Caco-2 (cell line): ENCODE measurements at regions of chr5 and their contacts with region 1.

Region 1: GRCh38 chr5:118987988-118988865 is at the start of gene DTWD2:
- DNase-seq: peak; percentile 95 to 98
- H3K4me3 ChIP-seq: peak within 1 kb of the TSS; percentile 94
- H3K4me3 Mint-ChIP-seq: peak within 1 kb of the TSS; percentile 81
- H3K27ac Mint-ChIP-seq: peak within 1 kb of the TSS; percentile 75
- H3K4me1 ChIP-seq: peaks cover 24% of the 10 kb centered on the region
- H3K4me1 Mint-ChIP-seq: peaks cover 17% of the 10 kb centered on the region
- H3K27me3 ChIP-seq: no peaks in the 10 kb centered on the region
- H3K27me3 Mint-ChIP-seq: no peaks in the 10 kb centered on the region
- CTCF ChIP-seq: peak; percentile 89 to 94
- total RNA-seq, gene DTWD2: 5.6 and 6.4 TPM in 2 replicates

Region 2: DNA sequence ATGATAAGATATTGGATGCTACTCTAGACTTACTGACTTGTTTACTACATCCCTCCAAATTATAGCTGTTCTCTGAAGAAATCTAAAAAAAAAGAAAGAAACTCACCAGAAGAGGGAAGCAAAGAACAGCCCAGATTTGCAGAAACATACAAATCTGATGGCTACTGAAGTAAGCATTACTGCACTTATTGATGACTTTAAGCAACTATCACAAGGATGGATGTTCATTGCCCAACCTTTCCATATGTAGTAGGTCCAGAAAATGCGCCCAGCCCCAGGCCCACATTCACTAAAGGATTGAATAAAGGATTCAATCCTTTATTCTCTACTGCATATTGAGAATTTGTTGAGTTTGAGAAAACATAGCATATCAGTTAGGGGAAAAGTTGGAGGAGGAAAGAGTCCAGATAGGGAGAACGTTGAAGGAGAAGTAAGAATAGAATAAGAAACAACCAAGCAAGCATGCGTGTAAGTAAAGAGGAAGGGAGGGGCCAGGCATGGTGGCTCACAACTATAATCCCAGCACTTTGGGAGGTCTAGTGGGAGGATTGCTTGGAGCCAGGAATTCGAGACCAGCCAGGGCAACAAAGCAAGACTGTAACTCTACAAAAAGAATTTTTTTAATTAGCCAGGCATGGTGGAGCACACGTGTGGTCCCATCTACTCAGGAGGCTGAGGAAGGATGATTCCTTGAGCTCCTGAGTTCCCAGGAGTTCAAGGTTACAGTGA is 34.0 kb after region 1 on chr5:
- CTCF ChIA-PET with region 1: interaction called, 4 read pairs
- POLR2A ChIA-PET with region 1: no interaction called
- intact Hi-C with region 1: loop called (anchors 1 kb)
- DNase-seq: peak in 1 of 2 experiments; percentile 34
- H3K4me3 ChIP-seq: no peak overlapping the region
- H3K4me3 Mint-ChIP-seq: no peak overlapping the region
- H3K27ac Mint-ChIP-seq: no peak overlapping the region
- H3K4me1 ChIP-seq: no peaks in the 10 kb centered on the region
- H3K4me1 Mint-ChIP-seq: peaks cover 7% of the 10 kb centered on the region
- H3K27me3 ChIP-seq: no peaks in the 10 kb centered on the region
- H3K27me3 Mint-ChIP-seq: no peaks in the 10 kb centered on the region
- CTCF ChIP-seq: peak; percentile 53 to 54

Region 3: GRCh38 chr5:119049824-119050449 is 61.7 kb after region 1 on chr5:
- CTCF ChIA-PET with region 1: no interaction called
- POLR2A ChIA-PET with region 1: no interaction called
- intact Hi-C with region 1: no loop called
- DNase-seq: no peak
- H3K4me3 ChIP-seq: no peak overlapping the region
- H3K4me3 Mint-ChIP-seq: no peak overlapping the region
- H3K27ac Mint-ChIP-seq: no peak overlapping the region
- H3K4me1 ChIP-seq: 0 out of 2 replicates have a peak, but pooled peaks cover 4% of the 10 kb centered on the region
- H3K4me1 Mint-ChIP-seq: no peaks in the 10 kb centered on the region
- H3K27me3 ChIP-seq: no peaks in the 10 kb centered on the region
- H3K27me3 Mint-ChIP-seq: no peaks in the 10 kb centered on the region
- CTCF ChIP-seq: no peak

Region 4: DNA sequence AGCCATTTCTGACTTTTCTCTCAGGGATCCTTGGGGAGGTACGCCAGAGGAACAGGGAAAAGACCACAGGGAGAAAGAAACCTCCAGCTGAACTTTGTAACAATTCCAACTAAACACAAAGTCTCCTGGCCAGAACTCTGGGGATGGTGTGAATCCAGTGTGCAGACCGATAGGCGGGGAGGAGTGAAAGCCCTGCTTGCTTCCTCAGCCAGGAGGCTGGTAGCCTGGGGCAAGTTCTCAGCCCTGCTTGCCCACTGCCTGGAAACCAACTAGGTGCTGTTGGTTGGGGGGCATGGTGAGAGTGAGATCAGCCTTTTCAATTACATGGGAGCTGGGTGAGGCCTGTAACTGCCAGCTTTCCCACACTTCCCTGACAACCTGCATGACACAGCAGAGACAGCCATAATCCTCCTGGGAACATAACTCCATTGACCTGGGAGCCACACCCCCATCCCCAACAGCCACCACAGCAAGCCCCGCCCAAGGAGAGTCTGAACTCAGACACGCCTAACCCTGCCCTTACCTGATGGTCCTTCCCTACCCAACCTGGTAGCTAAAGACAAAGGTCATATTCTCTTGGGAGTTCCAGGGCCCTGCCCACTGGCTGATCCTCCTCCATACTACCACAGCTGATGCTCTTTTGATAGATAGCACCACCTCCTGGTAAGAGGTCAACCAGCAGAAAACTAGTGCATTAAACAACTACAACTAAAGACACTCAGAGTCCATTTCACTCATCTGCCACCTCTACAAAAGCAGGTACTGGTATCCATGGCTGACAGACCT is 267.5 kb after region 1 on chr5:
- CTCF ChIA-PET with region 1: interaction called, 3 read pairs
- POLR2A ChIA-PET with region 1: no interaction called
- intact Hi-C with region 1: loop called (anchors 1 kb)
- DNase-seq: peak; percentile 71 to 88
- H3K4me3 ChIP-seq: no peak overlapping the region
- H3K4me3 Mint-ChIP-seq: no peak overlapping the region
- H3K27ac Mint-ChIP-seq: peak overlapping the region; percentile 51
- H3K4me1 ChIP-seq: peaks cover 9% of the 10 kb centered on the region; the same call in 1 of the 2 replicates
- H3K4me1 Mint-ChIP-seq: no peaks in the 10 kb centered on the region
- H3K27me3 ChIP-seq: no peaks in the 10 kb centered on the region
- H3K27me3 Mint-ChIP-seq: no peaks in the 10 kb centered on the region
- CTCF ChIP-seq: peak; percentile 12 to 34

Region 5: DNA sequence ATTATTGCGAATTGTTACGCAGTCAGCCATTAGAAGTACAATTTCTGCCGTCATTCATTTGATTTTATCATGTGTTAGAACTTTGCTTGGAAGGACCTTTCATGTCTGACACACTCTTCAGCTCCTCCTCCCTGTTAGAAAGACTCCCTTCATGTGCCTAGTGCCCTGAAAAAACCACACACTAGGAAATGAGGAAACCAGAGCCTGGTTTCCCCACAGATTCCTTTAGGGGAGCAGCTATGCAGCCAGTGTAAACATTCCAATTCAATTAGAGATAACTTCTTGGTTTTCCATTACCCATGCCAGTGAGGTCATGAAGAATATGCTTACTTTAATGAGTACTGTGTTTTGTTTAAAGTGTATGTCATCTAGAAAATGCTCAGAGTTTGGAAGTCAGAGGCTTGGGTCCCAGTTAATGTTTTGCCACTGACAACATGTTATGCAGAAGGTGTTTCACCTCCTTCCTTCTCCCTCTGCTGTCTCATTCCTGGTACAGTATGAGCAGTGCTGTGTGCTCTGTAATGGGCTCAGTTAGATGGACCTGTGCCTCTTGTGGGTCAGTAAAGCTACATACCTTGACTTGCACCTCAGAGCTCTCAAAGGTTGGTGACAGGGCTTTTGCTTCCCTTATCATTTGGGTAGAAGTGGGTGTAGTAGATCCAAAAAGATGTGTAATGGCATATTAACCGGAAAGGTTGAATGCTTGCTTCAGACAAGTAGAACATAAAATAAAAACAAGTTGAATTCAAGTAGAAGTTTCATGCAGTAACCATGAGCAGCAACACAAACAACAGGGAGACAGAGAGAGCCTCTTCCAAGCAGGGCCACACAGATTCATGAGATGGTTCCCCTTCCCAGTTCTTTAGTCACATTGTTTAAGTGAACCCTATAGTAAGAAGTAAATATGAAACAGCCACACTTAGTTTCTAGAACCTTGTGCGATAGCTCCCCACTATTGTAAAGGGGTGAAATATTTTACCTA is 315.0 kb after region 1 on chr5:
- CTCF ChIA-PET with region 1: interaction called, 3 read pairs
- POLR2A ChIA-PET with region 1: no interaction called
- intact Hi-C with region 1: loop called (anchors 1 kb)
- DNase-seq: peak; percentile 68 to 76
- H3K4me3 ChIP-seq: no peak overlapping the region
- H3K4me3 Mint-ChIP-seq: peak overlapping the region; percentile 45
- H3K27ac Mint-ChIP-seq: peak overlapping the region; percentile 85
- H3K4me1 ChIP-seq: peaks cover 31% of the 10 kb centered on the region
- H3K4me1 Mint-ChIP-seq: peaks cover 31% of the 10 kb centered on the region
- H3K27me3 ChIP-seq: no peaks in the 10 kb centered on the region
- H3K27me3 Mint-ChIP-seq: no peaks in the 10 kb centered on the region
- CTCF ChIP-seq: peak; percentile 16 to 21

Region 6: GRCh38 chr5:119335261-119335677 is 347.0 kb after region 1 on chr5:
- CTCF ChIA-PET with region 1: no interaction called
- POLR2A ChIA-PET with region 1: no interaction called
- intact Hi-C with region 1: loop called (anchors 1 kb)
- DNase-seq: no peak
- H3K4me3 ChIP-seq: no peak overlapping the region
- H3K4me3 Mint-ChIP-seq: no peak overlapping the region
- H3K27ac Mint-ChIP-seq: no peak overlapping the region
- H3K4me1 ChIP-seq: peaks cover 7% of the 10 kb centered on the region
- H3K4me1 Mint-ChIP-seq: peaks cover 17% of the 10 kb centered on the region
- H3K27me3 ChIP-seq: no peaks in the 10 kb centered on the region
- H3K27me3 Mint-ChIP-seq: no peaks in the 10 kb centered on the region
- CTCF ChIP-seq: no peak

Region 7: GRCh38 chr5:119452373-119453039 is 464.3 kb after region 1 on chr5 and contains the start of gene HSD17B4:
- CTCF ChIA-PET with region 1: no interaction called
- POLR2A ChIA-PET with region 1: interaction called, 3 read pairs
- intact Hi-C with region 1: loop called (anchors 1 kb)
- DNase-seq: peak; percentile 91 to 95
- H3K4me3 ChIP-seq: peak within 1 kb of the TSS; percentile 62
- H3K4me3 Mint-ChIP-seq: peak within 1 kb of the TSS; percentile 96
- H3K27ac Mint-ChIP-seq: peak within 1 kb of the TSS; percentile 97
- H3K4me1 ChIP-seq: peaks cover 12% of the 10 kb centered on the region
- H3K4me1 Mint-ChIP-seq: peaks cover 7% of the 10 kb centered on the region
- H3K27me3 ChIP-seq: no peaks in the 10 kb centered on the region
- H3K27me3 Mint-ChIP-seq: no peaks in the 10 kb centered on the region
- CTCF ChIP-seq: no peak
- total RNA-seq, gene HSD17B4: 172 and 175 TPM in 2 replicates